ENCODE measurements at regions of chr1 and their contacts with region 1.

Region 1: GRCh38 chr1:85330711-85331290 is 54.4 kb upstream of the BCL10 start:
- DNase-seq: peak; percentile 95
- H3K4me3 ChIP-seq: no peak overlapping the region
- H3K27ac ChIP-seq: peak overlapping the region; percentile 98
- H3K4me1 ChIP-seq: peaks cover 89% of the 10 kb centered on the region
- H3K27me3 ChIP-seq: no peaks in the 10 kb centered on the region
- CTCF ChIP-seq: no peak
- POLR2A ChIP-seq: peak; percentile 68

Region 2: GRCh38 chr1:85276215-85276977 is 54.4 kb before region 1 on chr1 and contains the start of gene BCL10:
- CTCF ChIA-PET with region 1: no interaction called
- POLR2A ChIA-PET with region 1: interaction called, 4 read pairs
- dilution Hi-C with region 1: no loop called
- intact Hi-C with region 1: loop called (anchors 1 kb)
- DNase-seq: peak; percentile 99
- H3K4me3 ChIP-seq: peak within 1 kb of the TSS; percentile 95 to 99 (median 98)
- H3K27ac ChIP-seq: peak within 1 kb of the TSS; percentile 100
- H3K4me1 ChIP-seq: peaks cover 56% of the 10 kb centered on the region
- H3K27me3 ChIP-seq: no peaks in the 10 kb centered on the region
- CTCF ChIP-seq: no peak
- POLR2A ChIP-seq: peak; percentile 64
- total RNA-seq, gene BCL10: 74.5 and 78.6 TPM in 2 replicates

Region 3: DNA sequence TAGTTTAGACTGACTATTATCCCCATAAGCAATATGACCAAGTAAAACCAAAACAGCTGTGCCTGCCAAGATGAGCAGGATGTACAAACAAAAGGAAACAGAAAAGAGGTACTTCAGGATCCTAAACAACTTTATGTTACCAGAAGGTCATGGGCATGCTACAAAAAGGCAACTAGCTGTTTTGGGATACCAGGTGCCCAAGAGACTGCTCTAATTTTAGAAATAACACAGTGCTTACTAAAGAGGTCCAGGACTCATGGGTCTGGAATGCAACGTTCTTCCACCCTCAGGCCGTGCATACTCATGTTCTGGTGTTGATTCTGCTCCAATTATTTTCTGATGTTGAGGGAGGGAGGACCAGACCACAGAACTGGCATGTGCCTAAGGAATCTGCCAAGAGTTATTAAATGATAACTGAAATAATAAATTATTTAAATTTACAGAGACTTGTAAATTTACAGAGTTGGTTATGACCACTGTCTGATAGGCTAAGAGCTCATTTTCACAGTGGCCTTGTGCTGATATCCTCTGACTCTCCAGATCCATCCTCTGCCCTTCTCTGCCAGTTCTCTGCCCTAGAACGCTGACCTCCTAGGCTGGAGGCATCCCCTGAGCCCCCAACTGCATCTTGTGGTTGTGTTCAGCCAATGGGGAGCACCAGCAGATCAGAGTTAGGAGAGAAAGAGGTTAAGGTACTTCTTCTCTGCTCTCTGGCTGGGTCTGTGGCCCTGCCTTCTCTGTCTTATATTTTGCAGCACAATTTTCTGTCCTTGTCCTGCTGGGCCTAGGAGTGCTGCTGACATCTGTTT is 16.7 kb before region 1 on chr1:
- CTCF ChIA-PET with region 1: interaction called, 18 read pairs
- POLR2A ChIA-PET with region 1: interaction called, 7 read pairs
- dilution Hi-C with region 1: no loop called
- intact Hi-C with region 1: loop called (anchors 1 kb)
- DNase-seq: peak; percentile 87
- H3K4me3 ChIP-seq: no peak overlapping the region
- H3K27ac ChIP-seq: peak overlapping the region; percentile 93
- H3K4me1 ChIP-seq: peaks cover 63% of the 10 kb centered on the region
- H3K27me3 ChIP-seq: no peaks in the 10 kb centered on the region
- CTCF ChIP-seq: no peak
- POLR2A ChIP-seq: peak; percentile 59

Region 4: GRCh38 chr1:85406887-85407533 is 76.2 kb after region 1 on chr1:
- CTCF ChIA-PET with region 1: no interaction called
- POLR2A ChIA-PET with region 1: no interaction called
- dilution Hi-C with region 1: no loop called
- intact Hi-C with region 1: loop called (anchors 2 kb)
- DNase-seq: peak; percentile 96
- H3K4me3 ChIP-seq: peak overlapping the region in 1 of 3 experiments; percentile 46
- H3K27ac ChIP-seq: peak overlapping the region; percentile 91
- H3K4me1 ChIP-seq: peaks cover 32% of the 10 kb centered on the region
- H3K27me3 ChIP-seq: no peaks in the 10 kb centered on the region
- CTCF ChIP-seq: no peak
- POLR2A ChIP-seq: no peak

Region 5: DNA sequence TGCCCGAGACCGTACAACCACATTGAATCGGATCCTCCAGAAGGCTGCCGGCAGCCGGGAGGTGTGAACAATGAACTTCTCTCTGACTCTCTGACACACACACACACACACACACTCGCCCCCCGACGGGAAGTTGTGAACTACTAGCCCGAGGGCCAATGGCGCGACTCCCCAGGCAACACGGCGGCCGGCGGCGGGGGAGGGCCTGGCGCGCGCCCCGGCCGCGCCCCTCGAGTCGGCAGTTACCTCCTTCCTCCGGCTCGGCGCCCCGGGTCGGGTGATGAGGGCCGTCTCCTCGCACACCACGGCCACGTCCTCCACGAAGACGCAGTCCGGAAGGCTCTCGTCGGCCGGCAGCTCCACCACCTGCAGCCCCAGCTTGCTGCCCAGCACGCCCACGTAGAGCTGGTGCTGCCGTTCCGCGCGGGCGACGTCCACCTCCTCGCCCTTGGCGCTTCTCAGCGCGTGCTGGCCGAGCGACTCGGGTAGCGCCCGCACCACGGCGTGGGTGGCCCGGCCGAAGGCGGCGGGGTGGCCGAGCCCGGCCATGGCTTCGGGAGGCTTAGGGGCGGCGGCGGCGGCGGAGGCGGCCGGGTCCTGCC is 133.8 kb after region 1 on chr1:
- CTCF ChIA-PET with region 1: interaction called, 6 read pairs
- POLR2A ChIA-PET with region 1: interaction called, 5 read pairs
- dilution Hi-C with region 1: no loop called
- intact Hi-C with region 1: loop called (anchors 1 kb)
- DNase-seq: peak; percentile 90
- H3K4me3 ChIP-seq: peak overlapping the region; percentile 65 to 97 (median 91)
- H3K27ac ChIP-seq: peak overlapping the region; percentile 90
- H3K4me1 ChIP-seq: peaks cover 39% of the 10 kb centered on the region
- H3K27me3 ChIP-seq: no peaks in the 10 kb centered on the region
- CTCF ChIP-seq: no peak
- POLR2A ChIP-seq: peak; percentile 92

Region 6: GRCh38 chr1:85576642-85577418 is 246.0 kb after region 1 on chr1:
- CTCF ChIA-PET with region 1: interaction called, 4 read pairs
- POLR2A ChIA-PET with region 1: interaction called, 47 read pairs
- dilution Hi-C with region 1: no loop called
- intact Hi-C with region 1: loop called (anchors 1 kb)
- DNase-seq: peak; percentile 87
- H3K4me3 ChIP-seq: peak overlapping the region; percentile 67 to 93 (median 80)
- H3K27ac ChIP-seq: peak overlapping the region; percentile 98
- H3K4me1 ChIP-seq: peaks cover 55% of the 10 kb centered on the region
- H3K27me3 ChIP-seq: no peaks in the 10 kb centered on the region
- CTCF ChIP-seq: peak; percentile 69 to 83
- POLR2A ChIP-seq: peak; percentile 17

Region 7: GRCh38 chr1:85607126-85607912 is 276.5 kb after region 1 on chr1:
- CTCF ChIA-PET with region 1: no interaction called
- POLR2A ChIA-PET with region 1: interaction called, 3 read pairs
- dilution Hi-C with region 1: no loop called
- intact Hi-C with region 1: loop called (anchors 1 kb)
- DNase-seq: peak; percentile 91
- H3K4me3 ChIP-seq: peak overlapping the region in 1 of 3 experiments; percentile 4
- H3K27ac ChIP-seq: peak overlapping the region; percentile 85
- H3K4me1 ChIP-seq: peaks cover 27% of the 10 kb centered on the region
- H3K27me3 ChIP-seq: no peaks in the 10 kb centered on the region
- CTCF ChIP-seq: no peak
- POLR2A ChIP-seq: peak; percentile 76